Activated B cell treated with CpG ODN at 0.5 μM for 24 hours (primary cell): ENCODE measurements at regions of chr15 and their contacts with region 1.

Region 1: DNA sequence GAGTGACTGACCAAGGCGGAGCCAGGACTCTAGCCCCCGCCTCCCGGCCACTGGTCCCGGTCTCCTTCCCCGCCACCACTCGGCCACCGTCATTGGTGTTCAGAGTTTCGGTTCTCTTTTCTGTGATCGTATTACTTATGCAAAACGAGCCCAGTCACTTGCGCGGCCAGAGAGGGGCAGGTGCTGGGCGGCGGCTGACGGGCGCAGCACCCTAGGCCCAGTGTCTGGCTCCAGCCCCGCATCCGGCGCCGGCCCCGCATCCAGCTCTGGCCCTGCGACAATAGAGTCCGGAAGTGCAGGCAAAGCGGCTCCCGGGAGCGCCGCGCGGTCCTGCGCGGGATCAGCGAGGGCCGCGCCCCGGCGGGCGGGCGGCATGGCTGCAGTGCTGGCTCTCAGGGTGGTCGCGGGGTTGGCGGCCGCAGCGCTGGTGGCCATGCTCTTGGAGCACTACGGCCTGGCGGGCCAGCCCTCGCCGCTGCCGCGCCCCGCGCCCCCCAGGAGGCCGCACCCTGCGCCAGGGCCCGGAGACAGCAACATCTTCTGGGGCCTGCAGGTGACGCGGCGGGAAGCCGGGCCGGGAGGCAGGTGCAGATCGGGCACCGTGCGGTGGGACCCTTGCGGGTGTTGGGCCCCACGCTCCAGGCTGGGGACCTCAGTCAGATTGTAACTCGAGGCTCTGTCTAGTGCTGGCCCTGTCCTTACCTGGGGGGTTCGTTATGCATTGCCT is at the start of gene TMEM62:
- DNase-seq: peak; percentile 74
- ATAC-seq: peak; percentile 92
- H3K4me3 Mint-ChIP-seq: peak within 1 kb of the TSS; percentile 89
- H3K27ac Mint-ChIP-seq: peak within 1 kb of the TSS; percentile 86
- H3K4me1 Mint-ChIP-seq: peaks cover 31% of the 10 kb centered on the region
- H3K27me3 Mint-ChIP-seq: no peaks in the 10 kb centered on the region
- CTCF ChIP-seq: no peak
- total RNA-seq, gene TMEM62: 38.3 and 52.2 TPM in 2 replicates

Region 2: DNA sequence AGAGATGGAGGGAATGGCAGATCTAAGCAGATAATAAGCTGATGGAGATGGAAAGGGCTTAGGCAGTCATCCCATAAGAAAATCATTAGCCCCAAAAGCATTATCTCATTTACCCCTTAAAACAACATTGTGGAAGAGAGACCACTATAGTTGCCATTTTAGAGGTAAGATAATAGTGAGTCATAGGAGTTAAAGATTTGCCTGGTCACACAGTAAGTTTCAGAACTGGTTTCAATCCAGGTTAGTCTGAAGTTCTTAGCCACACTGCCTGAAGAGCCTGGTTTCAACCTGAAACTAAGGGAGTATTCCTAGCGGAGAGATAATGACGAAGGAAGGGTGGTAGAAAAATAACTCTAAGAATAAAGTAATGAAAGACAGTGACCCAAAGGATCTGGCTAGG is 14.8 kb before region 1 on chr15:
- CTCF ChIA-PET with region 1: no interaction called
- POLR2A ChIA-PET with region 1: interaction called, 9 read pairs
- intact Hi-C with region 1: loop called (anchors 2 kb)
- DNase-seq: no peak
- ATAC-seq: peak; percentile 42
- H3K4me3 Mint-ChIP-seq: peak overlapping the region; percentile 7
- H3K27ac Mint-ChIP-seq: peak overlapping the region; percentile 92
- H3K4me1 Mint-ChIP-seq: peaks cover 39% of the 10 kb centered on the region
- H3K27me3 Mint-ChIP-seq: no peaks in the 10 kb centered on the region
- CTCF ChIP-seq: no peak

Region 3: DNA sequence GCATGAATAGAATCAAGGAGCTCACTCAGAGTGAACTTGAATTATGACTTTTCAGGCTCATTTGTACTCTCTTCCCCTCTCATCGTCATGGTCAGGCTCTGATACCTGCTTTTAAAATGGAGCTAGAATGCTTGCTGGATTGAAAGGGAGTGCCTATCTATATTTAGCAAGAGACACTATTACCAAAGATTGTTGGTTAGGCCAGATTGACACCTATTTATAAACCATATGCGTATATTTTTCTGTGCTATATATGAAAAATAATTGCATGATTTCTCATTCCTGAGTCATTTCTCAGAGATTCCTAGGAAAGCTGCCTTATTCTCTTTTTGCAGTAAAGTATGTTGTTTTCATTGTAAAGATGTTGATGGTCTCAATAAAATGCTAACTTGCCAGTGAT is 61.2 kb after region 1 on chr15:
- CTCF ChIA-PET with region 1: no interaction called
- POLR2A ChIA-PET with region 1: no interaction called
- intact Hi-C with region 1: no loop called
- DNase-seq: no peak
- ATAC-seq: no peak
- H3K4me3 Mint-ChIP-seq: no peak overlapping the region
- H3K27ac Mint-ChIP-seq: no peak overlapping the region
- H3K4me1 Mint-ChIP-seq: peaks cover 15% of the 10 kb centered on the region
- H3K27me3 Mint-ChIP-seq: no peaks in the 10 kb centered on the region
- CTCF ChIP-seq: no peak